ENCODE measurements at regions of chrX and their contacts with region 1.

Region 1: GRCh38 chrX:109635176-109635575 is 10.2 kb upstream of the KCNE5 start:
- DNase-seq: no peak
- ATAC-seq: peak; percentile 63
- H3K4me3 ChIP-seq: no peak overlapping the region
- H3K27ac ChIP-seq: no peak overlapping the region
- H3K4me1 ChIP-seq: no peaks in the 10 kb centered on the region
- H3K27me3 ChIP-seq: no peaks in the 10 kb centered on the region
- CTCF ChIP-seq: peak; percentile 37

Region 2: DNA sequence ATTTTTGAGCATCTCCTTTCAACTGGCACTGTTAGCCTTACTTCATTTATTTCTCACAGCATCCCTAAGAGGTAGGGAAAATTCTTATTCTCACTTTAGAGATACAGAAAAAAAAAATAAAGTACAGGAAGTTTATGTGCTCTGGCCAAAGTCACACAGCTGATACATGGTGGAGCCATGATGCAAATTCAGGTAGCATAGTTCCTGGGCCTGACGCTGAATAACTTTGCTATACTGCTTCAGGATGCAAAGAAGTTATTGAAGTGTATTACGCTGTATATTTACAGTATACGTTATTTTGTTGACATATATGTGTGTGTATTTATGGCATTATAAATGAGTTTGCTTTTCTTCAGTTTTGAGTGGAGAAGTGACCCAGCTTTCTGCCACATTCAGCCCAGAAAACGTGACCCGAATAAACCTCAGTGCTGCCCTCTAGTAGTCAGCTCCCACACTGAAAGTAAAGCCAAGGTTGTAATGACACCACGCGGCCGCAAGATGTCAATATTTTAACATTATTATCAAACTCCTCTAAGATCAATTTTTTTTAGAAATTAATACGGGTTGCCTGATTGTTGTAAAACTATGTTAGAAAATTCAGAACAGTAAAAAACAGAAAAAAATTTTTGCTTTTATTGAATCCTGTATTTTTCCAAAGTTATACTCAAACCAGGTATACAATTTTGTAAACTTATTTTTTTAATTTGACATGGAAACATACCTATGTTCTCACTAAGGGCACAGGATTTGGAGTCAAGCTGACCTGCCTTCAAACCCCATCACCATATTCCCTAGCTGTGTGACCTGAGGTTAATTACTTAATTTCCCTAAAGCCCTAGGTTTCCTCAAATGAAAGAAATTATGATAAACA is 149.5 kb before region 1 on chrX:
- intact Hi-C with region 1: loop called (anchors 10 kb)
- DNase-seq: peak; percentile 58
- ATAC-seq: peak; percentile 90
- H3K4me3 ChIP-seq: no peak overlapping the region
- H3K27ac ChIP-seq: no peak overlapping the region
- H3K4me1 ChIP-seq: no peaks in the 10 kb centered on the region
- H3K27me3 ChIP-seq: no peaks in the 10 kb centered on the region
- CTCF ChIP-seq: peak; percentile 85

Region 3: GRCh38 chrX:110569506-110569905 is 934.3 kb after region 1 on chrX:
- intact Hi-C with region 1: no loop called
- DNase-seq: no peak
- ATAC-seq: no peak
- H3K4me3 ChIP-seq: no peak overlapping the region
- H3K27ac ChIP-seq: no peak overlapping the region
- H3K4me1 ChIP-seq: no peaks in the 10 kb centered on the region
- H3K27me3 ChIP-seq: no peaks in the 10 kb centered on the region
- CTCF ChIP-seq: no peak

Measured in upper lobe of right lung (tissue), 1 donor.